ENCODE measurements at regions of chr12 and their contacts with region 1.

Region 1: DNA sequence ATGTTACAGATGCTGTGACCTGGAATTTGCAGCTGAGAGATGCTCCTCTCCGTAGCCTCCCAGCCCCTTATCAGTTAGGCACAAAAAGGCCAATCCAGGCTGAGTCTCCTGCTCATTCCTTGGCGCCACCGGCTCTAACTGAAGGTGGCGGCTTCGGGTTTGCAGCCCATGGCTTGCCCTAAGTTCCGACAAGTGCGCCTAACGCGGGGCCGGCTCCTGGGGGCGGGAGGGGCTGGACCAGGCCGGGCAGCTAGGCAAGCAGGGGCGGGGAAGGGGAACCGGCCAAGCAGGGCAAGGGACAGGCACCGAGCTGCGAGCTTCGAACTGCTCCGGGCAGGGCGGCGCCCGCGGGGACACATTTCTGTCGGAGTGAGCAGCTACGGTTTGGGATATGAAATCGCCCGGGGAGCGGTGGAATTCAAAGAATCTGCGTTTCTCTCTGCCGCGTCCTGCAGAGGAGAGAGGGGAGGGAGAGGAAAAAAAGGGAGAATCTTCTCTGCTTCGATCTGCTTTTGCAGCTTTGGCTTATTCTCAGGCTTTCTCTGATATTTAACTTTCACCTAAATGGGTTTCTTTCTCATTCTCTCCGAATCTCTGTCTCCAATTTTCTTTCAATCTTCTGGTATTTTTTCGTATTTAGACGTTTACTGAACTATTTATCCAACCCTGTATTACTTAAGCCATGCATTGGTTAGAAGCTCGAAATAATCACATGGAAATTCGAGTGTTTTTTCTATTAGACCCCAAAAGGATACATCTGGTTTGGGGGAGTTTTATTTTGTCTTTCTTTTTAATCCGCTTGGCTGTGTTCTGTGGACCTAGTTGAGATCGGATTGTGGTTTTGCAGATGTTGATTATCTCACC is 1.6 kb upstream of the HOXC12 start:
- DNase-seq: no peak
- ATAC-seq: no peak
- H3K4me3 ChIP-seq: no peak overlapping the region
- H3K4me3 Mint-ChIP-seq: peak overlapping the region; percentile 36
- H3K27ac ChIP-seq: no peak overlapping the region
- H3K27ac Mint-ChIP-seq: peak overlapping the region; percentile 49
- H3K4me1 ChIP-seq: peaks cover 49% of the 10 kb centered on the region
- H3K4me1 Mint-ChIP-seq: peaks cover 33% of the 10 kb centered on the region
- H3K27me3 ChIP-seq: peaks cover 97 to 99% of the 10 kb centered on the region in 2 experiments
- H3K27me3 Mint-ChIP-seq: peaks cover 95% of the 10 kb centered on the region
- CTCF ChIP-seq: no peak

Region 2: GRCh38 chr12:53935383-53936341 is 17.4 kb before region 1 on chr12:
- CTCF ChIA-PET with region 1: interaction called, 3 read pairs
- POLR2A ChIA-PET with region 1: no interaction called
- intact Hi-C with region 1: loop called in 1 of 2 experiments (anchors 2 kb)
- DNase-seq: no peak
- ATAC-seq: no peak
- H3K4me3 ChIP-seq: no peak overlapping the region
- H3K4me3 Mint-ChIP-seq: no peak overlapping the region
- H3K27ac ChIP-seq: no peak overlapping the region
- H3K27ac Mint-ChIP-seq: no peak overlapping the region
- H3K4me1 ChIP-seq: peaks cover 19% of the 10 kb centered on the region
- H3K4me1 Mint-ChIP-seq: peaks cover 35% of the 10 kb centered on the region
- H3K27me3 ChIP-seq: peaks cover 88 to 99% of the 10 kb centered on the region in 2 experiments
- H3K27me3 Mint-ChIP-seq: peaks cover 90% of the 10 kb centered on the region
- CTCF ChIP-seq: no peak

Region 3: DNA sequence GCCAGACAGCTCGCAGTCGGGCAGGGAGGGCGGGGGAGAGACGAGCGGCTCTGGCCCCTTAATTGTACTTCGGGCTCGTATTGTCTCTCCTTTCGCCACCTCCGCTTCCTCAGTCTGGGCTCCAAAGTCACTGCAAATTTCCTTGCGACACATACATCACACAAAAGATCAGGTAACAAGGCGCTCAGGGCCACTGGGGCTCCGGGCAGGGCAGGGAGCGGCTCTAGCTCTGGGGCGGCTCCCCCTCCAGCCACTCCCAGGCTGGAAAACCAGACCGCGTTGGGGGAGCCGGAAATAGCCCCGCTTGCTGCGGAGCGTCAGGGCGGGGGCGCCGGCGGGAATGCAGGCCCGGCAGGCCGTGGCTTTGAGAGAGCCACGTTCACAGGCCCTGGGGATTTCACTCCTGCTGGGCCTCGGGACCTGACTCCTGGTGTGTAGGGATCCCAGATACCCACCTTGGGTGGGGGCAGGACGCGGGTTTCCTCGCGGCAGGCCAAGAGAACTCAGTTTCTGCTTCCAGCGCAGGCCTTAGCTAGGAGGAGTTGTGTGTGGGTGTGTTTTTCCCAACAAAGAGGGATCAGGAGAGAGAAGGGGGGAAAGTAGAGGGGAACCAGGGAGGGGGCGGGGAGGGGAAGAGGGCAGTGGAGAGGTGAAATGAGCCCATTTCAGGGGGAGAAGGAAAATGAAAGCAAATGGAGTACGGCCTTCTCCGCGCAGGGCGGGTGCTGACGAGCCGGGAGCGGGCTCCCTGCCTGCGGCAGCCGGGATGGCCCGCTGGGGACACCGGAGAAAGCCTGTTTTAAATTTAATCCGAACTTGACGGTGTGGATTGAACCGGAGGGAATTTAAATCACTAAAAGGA is 42.5 kb after region 1 on chr12:
- CTCF ChIA-PET with region 1: no interaction called
- POLR2A ChIA-PET with region 1: no interaction called
- intact Hi-C with region 1: no loop called
- DNase-seq: peak in 3 of 14 experiments; percentile 36 to 54 (median 48)
- ATAC-seq: peak; percentile 50
- H3K4me3 ChIP-seq: peak overlapping the region; percentile 58
- H3K4me3 Mint-ChIP-seq: peak overlapping the region; percentile 88
- H3K27ac ChIP-seq: no peak overlapping the region
- H3K27ac Mint-ChIP-seq: no peak overlapping the region
- H3K4me1 ChIP-seq: peaks cover 60% of the 10 kb centered on the region
- H3K4me1 Mint-ChIP-seq: peaks cover 61% of the 10 kb centered on the region
- H3K27me3 ChIP-seq: peaks cover 97 to 99% of the 10 kb centered on the region in 2 experiments
- H3K27me3 Mint-ChIP-seq: peaks cover 100% of the 10 kb centered on the region
- CTCF ChIP-seq: no peak